GM10248 (cell line): ENCODE measurements at regions of chr2 and their contacts with region 1.

Region 1: DNA sequence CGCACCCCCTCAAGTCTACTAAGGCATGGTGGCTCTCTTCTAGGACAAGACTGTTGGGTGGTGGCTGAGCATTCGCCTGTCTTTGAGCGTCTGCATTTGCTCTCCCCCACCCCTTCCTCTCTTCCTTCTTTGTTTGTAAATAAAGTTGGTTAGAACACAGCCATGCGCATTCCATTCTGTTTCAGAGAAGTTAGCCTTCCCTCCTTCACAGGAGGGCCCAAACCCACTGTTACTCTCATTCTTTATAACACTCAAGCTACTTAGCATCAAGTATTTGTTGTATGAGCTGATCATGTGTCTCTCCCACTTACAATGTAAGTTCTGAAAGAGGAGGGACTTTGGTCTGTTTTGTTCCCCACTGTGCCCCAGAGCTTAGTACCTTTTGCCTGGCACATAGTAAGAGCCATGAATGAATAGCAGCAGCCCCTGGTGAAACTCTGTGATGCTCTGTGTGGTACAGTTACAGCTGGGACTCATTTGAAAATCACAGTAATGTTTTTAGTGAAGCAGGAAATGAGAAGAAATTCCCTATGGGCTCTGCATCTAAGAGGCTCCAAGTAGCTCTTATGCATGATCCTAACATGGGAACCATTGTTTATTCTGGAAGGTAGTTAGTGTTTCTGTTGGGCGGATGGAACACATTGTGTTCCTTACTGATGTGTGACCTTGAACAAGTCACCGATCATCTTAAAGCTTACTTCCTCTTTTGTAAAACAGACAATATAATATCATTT is 7.7 kb downstream of the MGAT5 start:
- DNase-seq: no peak
- CTCF ChIP-seq: no peak

Region 2: GRCh38 chr2:134275058-134275862 is 13.7 kb after region 1 on chr2:
- CTCF ChIA-PET with region 1: interaction called, 13 read pairs
- POLR2A ChIA-PET with region 1: interaction called, 8 read pairs
- DNase-seq: peak; percentile 56
- CTCF ChIP-seq: no peak